WTC11 (cell line): ENCODE measurements at regions of chr2 and their contacts with region 1.

Region 1: DNA sequence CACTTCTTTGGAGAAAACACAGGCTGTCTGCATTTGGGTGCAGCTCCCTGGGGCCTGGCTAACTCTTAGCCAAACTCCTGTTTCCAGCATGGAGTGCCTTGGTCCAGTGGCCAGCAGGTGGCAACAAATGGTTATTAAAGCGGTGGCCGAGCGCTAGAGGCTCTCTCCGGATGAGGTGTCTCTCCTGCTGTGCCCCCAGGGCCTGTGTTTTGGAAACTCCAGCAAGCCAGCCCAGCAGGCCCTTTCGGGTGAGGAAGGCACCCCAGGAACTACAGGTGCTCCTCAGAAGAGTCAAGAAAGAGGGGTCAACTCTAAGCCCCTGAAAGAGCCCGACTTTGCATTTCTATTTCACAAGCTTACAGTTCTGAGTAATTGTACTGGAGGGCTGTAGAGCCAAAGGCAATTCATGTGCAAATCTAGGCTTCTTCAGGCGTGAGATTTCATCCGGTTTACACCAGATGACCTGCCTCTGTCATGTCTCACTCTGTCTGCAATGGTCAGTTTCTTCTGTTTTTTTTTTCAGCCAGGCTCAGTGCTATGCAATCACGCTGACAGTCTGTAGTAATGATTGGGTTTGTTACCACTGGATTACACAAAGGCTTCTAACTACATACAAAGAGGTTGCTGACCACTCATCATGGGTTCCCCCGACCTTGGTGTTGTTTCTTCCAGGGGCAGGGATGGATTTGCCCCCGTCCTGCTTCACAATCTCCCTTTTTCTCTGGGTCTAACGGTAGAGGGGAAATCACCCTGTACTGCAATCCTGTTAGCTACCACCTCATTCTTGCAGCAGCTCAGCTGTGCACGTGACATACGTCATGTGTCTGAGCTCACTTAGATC is 7.6 kb upstream of the CHRNA1 start:
- DNase-seq: peak; percentile 90
- ATAC-seq: peak; percentile 78
- H3K4me3 Mint-ChIP-seq: peak overlapping the region; percentile 34; the same call in 1 of the 2 replicates
- H3K27ac Mint-ChIP-seq: peak overlapping the region; percentile 97
- H3K4me1 Mint-ChIP-seq: peaks cover 70% of the 10 kb centered on the region
- H3K27me3 Mint-ChIP-seq: no peaks in the 10 kb centered on the region
- CTCF ChIP-seq: peak; percentile 60; the same call in 1 of the 2 replicates

Region 2: DNA sequence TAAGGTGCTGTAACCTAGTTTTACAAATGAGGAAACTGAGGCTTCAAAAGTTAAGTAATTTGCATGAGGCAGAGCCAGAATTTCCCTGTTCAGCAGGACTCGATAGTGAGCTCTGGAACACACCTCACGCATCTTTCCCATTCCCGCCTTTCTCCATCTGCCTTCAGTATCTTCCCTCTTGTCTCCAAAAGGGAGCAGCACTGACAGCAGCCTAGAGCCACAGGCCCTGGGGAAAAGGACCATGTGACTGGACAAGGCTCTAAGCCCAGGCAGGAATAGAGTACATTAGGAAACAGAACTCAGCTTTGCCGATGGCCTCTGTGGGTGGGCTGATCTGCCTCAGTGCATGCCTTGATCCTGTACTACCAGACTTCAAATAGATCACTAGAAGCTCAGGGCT is 306.5 kb before region 1 on chr2:
- CTCF ChIA-PET with region 1: no interaction called
- POLR2A ChIA-PET with region 1: no interaction called
- DNase-seq: peak; percentile 56
- ATAC-seq: peak; percentile 97
- H3K4me3 Mint-ChIP-seq: no peak overlapping the region
- H3K27ac Mint-ChIP-seq: no peak overlapping the region
- H3K4me1 Mint-ChIP-seq: no peaks in the 10 kb centered on the region
- H3K27me3 Mint-ChIP-seq: peaks cover 11% of the 10 kb centered on the region
- CTCF ChIP-seq: no peak

Region 3: GRCh38 chr2:174688079-174688478 is 83.8 kb before region 1 on chr2:
- CTCF ChIA-PET with region 1: no interaction called
- POLR2A ChIA-PET with region 1: no interaction called
- DNase-seq: no peak
- ATAC-seq: no peak
- H3K4me3 Mint-ChIP-seq: no peak overlapping the region
- H3K27ac Mint-ChIP-seq: no peak overlapping the region
- H3K4me1 Mint-ChIP-seq: peaks cover 12% of the 10 kb centered on the region
- H3K27me3 Mint-ChIP-seq: peaks cover 25% of the 10 kb centered on the region
- CTCF ChIP-seq: no peak

Region 4: GRCh38 chr2:174787487-174788205 is 15.8 kb after region 1 on chr2:
- CTCF ChIA-PET with region 1: interaction called, 45 read pairs
- POLR2A ChIA-PET with region 1: interaction called, 3 read pairs
- DNase-seq: peak; percentile 68
- ATAC-seq: peak; percentile 76
- H3K4me3 Mint-ChIP-seq: peak overlapping the region; percentile 18; the same call in 1 of the 2 replicates
- H3K27ac Mint-ChIP-seq: peak overlapping the region; percentile 97
- H3K4me1 Mint-ChIP-seq: peaks cover 69% of the 10 kb centered on the region
- H3K27me3 Mint-ChIP-seq: no peaks in the 10 kb centered on the region
- CTCF ChIP-seq: no peak

Region 5: GRCh38 chr2:174797781-174798276 is 26.0 kb after region 1 on chr2:
- CTCF ChIA-PET with region 1: interaction called, 35 read pairs
- POLR2A ChIA-PET with region 1: no interaction called
- DNase-seq: no peak
- ATAC-seq: no peak
- H3K4me3 Mint-ChIP-seq: no peak overlapping the region
- H3K27ac Mint-ChIP-seq: peak overlapping the region; percentile 46; the same call in 1 of the 2 replicates
- H3K4me1 Mint-ChIP-seq: peaks cover 55% of the 10 kb centered on the region
- H3K27me3 Mint-ChIP-seq: no peaks in the 10 kb centered on the region
- CTCF ChIP-seq: no peak

Region 6: GRCh38 chr2:174985630-174986029 is 213.8 kb after region 1 on chr2:
- CTCF ChIA-PET with region 1: interaction called, 68 read pairs
- POLR2A ChIA-PET with region 1: interaction called, 3 read pairs
- DNase-seq: no peak
- ATAC-seq: no peak
- H3K4me3 Mint-ChIP-seq: no peak overlapping the region
- H3K27ac Mint-ChIP-seq: no peak overlapping the region
- H3K4me1 Mint-ChIP-seq: peaks cover 33% of the 10 kb centered on the region
- H3K27me3 Mint-ChIP-seq: no peaks in the 10 kb centered on the region
- CTCF ChIP-seq: no peak

Region 7: GRCh38 chr2:174992886-174993285 is 221.0 kb after region 1 on chr2:
- CTCF ChIA-PET with region 1: interaction called, 68 read pairs
- POLR2A ChIA-PET with region 1: interaction called, 3 read pairs
- DNase-seq: no peak
- ATAC-seq: no peak
- H3K4me3 Mint-ChIP-seq: no peak overlapping the region
- H3K27ac Mint-ChIP-seq: no peak overlapping the region
- H3K4me1 Mint-ChIP-seq: peaks cover 36% of the 10 kb centered on the region
- H3K27me3 Mint-ChIP-seq: no peaks in the 10 kb centered on the region
- CTCF ChIP-seq: no peak

Region 8: GRCh38 chr2:175004980-175005732 is 233.3 kb after region 1 on chr2 and contains the start of gene CHN1:
- CTCF ChIA-PET with region 1: interaction called, 10 read pairs
- POLR2A ChIA-PET with region 1: no interaction called
- DNase-seq: peak; percentile 81
- ATAC-seq: peak; percentile 79
- H3K4me3 Mint-ChIP-seq: peak within 1 kb of the TSS; percentile 89
- H3K27ac Mint-ChIP-seq: peak within 1 kb of the TSS; percentile 91
- H3K4me1 Mint-ChIP-seq: peaks cover 51% of the 10 kb centered on the region
- H3K27me3 Mint-ChIP-seq: no peaks in the 10 kb centered on the region
- CTCF ChIP-seq: no peak
- total RNA-seq, gene CHN1: 26.1 to 30.0 TPM (median 28.0 TPM) in 3 replicates

Region 9: DNA sequence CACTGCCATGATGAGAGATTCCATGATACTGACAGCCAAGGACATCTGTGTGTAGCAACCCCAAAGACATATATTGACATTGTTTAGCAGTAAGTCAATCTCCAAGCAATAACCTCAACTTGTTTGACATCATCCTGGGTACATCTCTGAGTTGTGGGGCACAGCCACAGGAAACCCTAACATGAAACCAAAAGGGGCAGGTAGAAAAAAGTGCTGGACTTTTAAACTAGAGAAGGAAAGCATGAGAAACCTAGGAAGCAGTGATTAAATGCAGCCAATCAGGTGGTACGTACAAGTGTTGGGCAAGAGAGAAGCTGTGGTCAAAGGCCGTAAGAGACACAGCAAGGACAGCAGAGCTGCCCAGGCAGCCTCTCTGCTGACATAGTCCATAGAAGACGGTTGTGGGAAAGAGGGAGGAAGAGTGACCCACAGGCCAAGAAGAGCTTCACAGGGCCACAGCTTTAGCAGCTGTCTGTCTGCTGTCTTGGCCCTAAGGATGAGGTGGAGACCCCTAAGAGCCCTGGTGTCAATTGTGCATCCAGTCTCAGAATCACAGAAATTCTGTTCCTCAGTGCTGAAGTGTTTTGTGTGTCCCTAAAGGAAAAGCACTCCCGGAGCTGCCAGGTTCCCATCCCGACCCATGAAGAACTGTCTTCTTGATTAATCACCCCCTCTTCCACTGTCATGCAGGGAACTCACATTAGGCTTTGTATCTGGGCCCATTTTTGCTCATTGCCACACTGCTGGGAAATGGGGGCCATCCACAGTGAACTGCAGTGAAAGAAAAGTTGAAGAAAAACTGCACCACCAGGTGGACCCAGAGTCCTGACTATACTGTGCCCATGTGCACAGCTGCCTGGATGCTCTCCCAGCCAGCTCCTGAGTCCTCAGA is 258.8 kb after region 1 on chr2:
- CTCF ChIA-PET with region 1: interaction called, 15 read pairs
- POLR2A ChIA-PET with region 1: no interaction called
- DNase-seq: peak; percentile 61
- ATAC-seq: peak; percentile 99
- H3K4me3 Mint-ChIP-seq: no peak overlapping the region
- H3K27ac Mint-ChIP-seq: no peak overlapping the region
- H3K4me1 Mint-ChIP-seq: peaks cover 13% of the 10 kb centered on the region
- H3K27me3 Mint-ChIP-seq: no peaks in the 10 kb centered on the region
- CTCF ChIP-seq: 0 out of 2 replicates have a peak, but pooled peaks have one; percentile 18